ENCODE measurements at regions of chr9 and their contacts with region 1.

Region 1: GRCh38 chr9:107172160-107172978 is 110.7 kb upstream of the RAD23B start:
- DNase-seq: peak; percentile 72 to 84 (median 82)
- ATAC-seq: peak; percentile 73 to 75
- H3K4me3 ChIP-seq: no peak overlapping the region
- H3K27ac ChIP-seq: no peak overlapping the region
- H3K4me1 ChIP-seq: peaks cover 14% of the 10 kb centered on the region
- H3K27me3 ChIP-seq: no peaks in the 10 kb centered on the region

Region 2: GRCh38 chr9:105901514-105902109 is 1270.8 kb before region 1 on chr9:
- intact Hi-C with region 1: loop called in 1 of 4 experiments (anchors 10 kb)
- DNase-seq: peak; percentile 35 to 67 (median 63)
- ATAC-seq: peak; percentile 85 to 90
- H3K4me3 ChIP-seq: no peak overlapping the region
- H3K27ac ChIP-seq: no peak overlapping the region
- H3K4me1 ChIP-seq: no peaks in the 10 kb centered on the region
- H3K27me3 ChIP-seq: no peaks in the 10 kb centered on the region

Region 3: DNA sequence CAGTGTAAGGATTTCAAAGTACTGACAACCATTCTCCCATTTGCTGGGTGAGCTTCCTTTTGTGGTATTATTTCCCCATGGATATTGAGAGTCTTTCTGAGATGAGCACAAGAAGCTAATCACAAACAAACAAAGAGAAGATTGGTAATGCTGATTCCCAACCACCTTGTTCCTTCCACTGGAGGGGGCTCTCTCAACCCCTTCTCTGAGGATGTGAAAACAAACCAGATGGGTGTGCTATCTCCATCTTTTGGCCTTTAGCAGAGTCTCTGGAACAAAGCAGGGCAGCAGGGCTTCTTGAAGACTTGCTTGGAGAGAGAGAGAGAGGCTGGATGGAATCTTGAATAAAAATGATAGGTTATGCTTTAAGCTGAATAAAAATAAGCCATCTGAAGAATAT is 886.1 kb before region 1 on chr9:
- intact Hi-C with region 1: loop called in 1 of 4 experiments (anchors 10 kb)
- DNase-seq: no peak
- ATAC-seq: peak in 1 of 2 donors; percentile 63
- H3K4me3 ChIP-seq: no peak overlapping the region
- H3K27ac ChIP-seq: no peak overlapping the region
- H3K4me1 ChIP-seq: no peaks in the 10 kb centered on the region
- H3K27me3 ChIP-seq: no peaks in the 10 kb centered on the region

Region 4: GRCh38 chr9:107274096-107274495 is 101.7 kb after region 1 on chr9:
- intact Hi-C with region 1: no loop called
- DNase-seq: no peak
- ATAC-seq: no peak
- H3K4me3 ChIP-seq: no peak overlapping the region
- H3K27ac ChIP-seq: no peak overlapping the region
- H3K4me1 ChIP-seq: no peaks in the 10 kb centered on the region
- H3K27me3 ChIP-seq: no peaks in the 10 kb centered on the region

Measured in right cardiac atrium (tissue), 5 donors.